ENCODE measurements at regions of chr11 and their contacts with region 1.

Region 1: DNA sequence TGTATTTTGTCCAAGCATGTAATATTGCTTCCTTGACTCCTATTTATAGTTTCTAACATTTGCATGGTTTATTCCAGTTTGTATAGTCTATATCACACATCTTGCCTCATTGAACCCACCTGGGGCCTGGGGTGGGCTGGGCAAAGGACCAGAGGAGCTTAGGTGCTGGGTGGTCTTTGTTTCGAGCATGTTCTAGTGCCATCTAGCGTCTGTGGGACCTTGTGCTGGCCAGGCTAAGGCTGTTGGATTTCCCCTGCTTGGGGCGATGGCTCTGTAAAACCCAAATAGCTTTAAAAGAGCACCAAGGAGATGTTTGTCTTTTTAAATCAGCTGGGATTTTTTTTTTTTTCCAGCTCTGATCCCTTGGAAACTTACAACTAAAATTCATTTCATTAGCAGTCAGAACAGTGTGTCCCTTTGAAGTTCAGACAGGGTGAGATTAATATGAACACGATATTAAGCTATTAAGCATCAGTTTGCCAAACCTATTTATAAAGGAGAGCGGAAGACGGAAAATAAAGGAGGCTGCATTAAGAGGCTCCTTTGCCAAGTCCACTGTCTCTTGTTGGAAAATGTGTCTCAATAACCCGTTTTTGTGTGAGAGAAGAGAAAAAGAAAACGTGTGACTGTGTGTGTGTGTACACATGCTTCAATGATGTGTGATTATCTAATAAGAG is 157.4 kb downstream of the COMMD9 start:
- DNase-seq: peak; percentile 29 to 86 (median 50)
- H3K4me3 ChIP-seq: no peak overlapping the region
- H3K27ac ChIP-seq: peak overlapping the region in 2 of 5 donors; percentile 24 to 44
- H3K4me1 ChIP-seq: no peaks in the 10 kb centered on the region
- H3K27me3 ChIP-seq: no peaks in the 10 kb centered on the region
- CTCF ChIP-seq: peak; percentile 29 to 62 (median 49)
- POLR2A ChIP-seq: no peak

Region 2: GRCh38 chr11:35714882-35715627 is 416.8 kb before region 1 on chr11:
- intact Hi-C with region 1: loop called in 1 of 2 experiments (anchors 5 kb)
- DNase-seq: no peak
- H3K4me3 ChIP-seq: no peak overlapping the region
- H3K27ac ChIP-seq: no peak overlapping the region
- H3K4me1 ChIP-seq: no peaks in the 10 kb centered on the region
- H3K27me3 ChIP-seq: no peaks in the 10 kb centered on the region
- CTCF ChIP-seq: no peak
- POLR2A ChIP-seq: no peak

Region 3: DNA sequence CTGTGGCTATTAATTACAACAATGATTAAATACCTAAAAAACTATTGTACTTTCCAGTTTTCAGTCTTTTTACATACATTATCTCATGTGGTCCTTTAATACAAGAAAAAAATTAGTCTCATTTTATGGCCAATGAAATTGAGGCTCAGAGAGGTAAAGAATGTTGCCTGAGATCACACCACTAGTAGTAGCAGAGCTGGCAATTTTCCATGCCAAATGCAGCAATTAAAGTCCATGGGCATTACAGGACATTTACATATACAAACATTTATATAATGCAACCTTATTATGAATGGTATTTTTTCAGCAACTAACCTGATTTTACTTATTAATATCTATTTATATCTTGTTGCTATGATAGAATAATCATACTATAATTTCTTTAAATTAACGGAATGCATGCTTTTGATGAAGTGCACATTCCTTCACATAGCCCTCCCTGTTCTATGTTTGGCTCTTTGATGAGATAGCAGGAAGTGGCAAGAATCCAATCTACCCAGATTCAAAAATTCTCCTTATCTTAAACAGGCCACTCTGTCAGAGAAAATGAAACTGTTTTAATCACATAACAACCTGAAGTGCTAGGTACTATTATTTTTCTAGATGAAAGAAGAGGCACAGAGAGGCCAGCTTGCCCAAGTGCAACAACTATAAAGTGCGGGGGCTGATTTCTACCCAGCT is 308.9 kb before region 1 on chr11:
- intact Hi-C with region 1: loop called in 1 of 2 experiments (anchors 10 kb)
- DNase-seq: no peak
- H3K4me3 ChIP-seq: no peak overlapping the region
- H3K27ac ChIP-seq: no peak overlapping the region
- H3K4me1 ChIP-seq: peaks cover 0 to 21% of the 10 kb centered on the region in 2 donors
- H3K27me3 ChIP-seq: no peaks in the 10 kb centered on the region
- CTCF ChIP-seq: no peak
- POLR2A ChIP-seq: no peak

Region 4: GRCh38 chr11:36041988-36042611 is 89.8 kb before region 1 on chr11:
- intact Hi-C with region 1: no loop called
- DNase-seq: peak in 1 of 7 donors; percentile 12
- H3K4me3 ChIP-seq: no peak overlapping the region
- H3K27ac ChIP-seq: no peak overlapping the region
- H3K4me1 ChIP-seq: no peaks in the 10 kb centered on the region
- H3K27me3 ChIP-seq: no peaks in the 10 kb centered on the region
- CTCF ChIP-seq: peak; percentile 37 to 59 (median 50)
- POLR2A ChIP-seq: no peak